ENCODE measurements at regions of chr2 and their contacts with region 1.

Region 1: DNA sequence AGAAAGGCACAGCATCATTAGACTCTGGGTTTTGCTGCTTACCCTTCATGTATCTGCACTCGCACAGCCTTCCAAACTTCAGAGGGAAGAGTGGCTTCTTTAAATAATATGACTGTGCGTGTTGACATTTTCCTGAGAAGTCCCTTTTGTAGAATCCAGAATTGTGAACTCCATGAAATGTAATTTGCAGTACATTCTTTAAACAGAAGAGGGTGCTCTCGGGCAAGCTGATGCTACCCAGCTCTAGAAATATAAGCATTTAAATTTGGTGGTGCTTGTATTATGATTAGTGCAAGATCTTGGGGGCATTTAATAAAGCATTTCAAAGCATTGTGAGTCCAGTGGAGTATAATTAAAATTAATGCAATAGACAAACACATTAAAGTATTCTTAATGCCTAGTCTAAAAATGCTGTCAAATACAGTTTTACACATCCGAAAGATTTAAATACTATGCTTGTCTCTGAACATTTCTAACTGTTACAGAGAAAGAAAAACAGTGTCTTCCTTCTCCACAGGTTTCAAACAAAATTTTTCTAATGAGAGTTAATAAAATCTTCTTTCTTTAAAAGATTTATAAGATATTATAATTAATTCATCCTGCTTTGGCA is 17.3 kb upstream of the GTF2A1L start:
- DNase-seq: no peak
- H3K4me3 ChIP-seq: no peak overlapping the region
- H3K27ac ChIP-seq: peak overlapping the region in 3 of 4 donors; percentile 5 to 30 (median 29)
- H3K4me1 ChIP-seq: peaks cover 0 to 38% (median 34%) of the 10 kb centered on the region in 4 donors
- H3K27me3 ChIP-seq: no peaks in the 10 kb centered on the region
- CTCF ChIP-seq: peak; percentile 56 to 77 (median 75)
- EP300 ChIP-seq: no peak
- POLR2A ChIP-seq: no peak

Region 2: DNA sequence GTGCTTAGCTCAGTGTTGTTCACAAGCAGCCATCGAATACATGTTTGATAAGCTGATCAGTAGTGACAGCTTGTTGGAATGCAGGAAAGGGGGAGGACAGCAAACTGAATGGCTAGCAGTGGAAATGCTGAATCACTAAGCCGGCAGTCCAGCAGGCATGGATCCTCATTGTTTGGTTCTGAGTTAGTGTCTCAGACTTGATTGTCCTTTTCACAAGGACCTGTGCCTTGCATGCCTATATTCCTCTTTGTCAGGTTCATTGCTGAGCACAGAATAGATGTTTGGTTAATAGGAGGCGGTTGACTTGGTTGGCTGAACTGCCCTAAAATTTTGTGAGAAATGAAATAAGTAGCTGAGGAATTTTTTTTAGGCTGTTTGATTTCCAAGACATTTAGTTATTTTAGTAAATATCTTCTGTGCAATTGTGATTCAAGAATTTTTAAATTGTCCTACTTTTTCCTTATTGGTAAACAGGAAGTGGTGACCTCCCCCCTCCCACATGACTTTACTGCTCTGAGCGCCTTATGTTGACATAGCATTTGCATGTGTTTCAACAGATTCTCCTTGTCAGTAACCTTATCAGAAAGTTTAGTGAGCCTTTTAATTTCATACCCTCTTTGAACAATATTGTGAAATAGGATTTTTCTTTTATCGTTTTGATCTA is 91.7 kb before region 1 on chr2:
- intact Hi-C with region 1: no loop called
- DNase-seq: no peak
- H3K4me3 ChIP-seq: no peak overlapping the region
- H3K27ac ChIP-seq: peak overlapping the region; percentile 73 to 90 (median 80)
- H3K4me1 ChIP-seq: peaks cover 21 to 49% (median 44%) of the 10 kb centered on the region in 4 donors
- H3K27me3 ChIP-seq: no peaks in the 10 kb centered on the region
- CTCF ChIP-seq: no peak
- EP300 ChIP-seq: no peak
- POLR2A ChIP-seq: no peak

Region 3: GRCh38 chr2:48651153-48651790 is 51.0 kb after region 1 on chr2:
- intact Hi-C with region 1: no loop called
- DNase-seq: no peak
- H3K4me3 ChIP-seq: no peak overlapping the region
- H3K27ac ChIP-seq: no peak overlapping the region
- H3K4me1 ChIP-seq: peaks cover 0 to 10% (median 10%) of the 10 kb centered on the region in 4 donors
- H3K27me3 ChIP-seq: no peaks in the 10 kb centered on the region
- CTCF ChIP-seq: no peak
- EP300 ChIP-seq: no peak
- POLR2A ChIP-seq: no peak

Region 4: GRCh38 chr2:48727565-48727964 is 127.3 kb after region 1 on chr2:
- intact Hi-C with region 1: loop called (anchors 2 kb)
- DNase-seq: no peak
- H3K4me3 ChIP-seq: no peak overlapping the region
- H3K27ac ChIP-seq: peak overlapping the region; percentile 40 to 71 (median 67)
- H3K4me1 ChIP-seq: peaks cover 15 to 53% (median 43%) of the 10 kb centered on the region in 4 donors
- H3K27me3 ChIP-seq: no peaks in the 10 kb centered on the region
- CTCF ChIP-seq: no peak
- EP300 ChIP-seq: no peak
- POLR2A ChIP-seq: no peak

Region 5: DNA sequence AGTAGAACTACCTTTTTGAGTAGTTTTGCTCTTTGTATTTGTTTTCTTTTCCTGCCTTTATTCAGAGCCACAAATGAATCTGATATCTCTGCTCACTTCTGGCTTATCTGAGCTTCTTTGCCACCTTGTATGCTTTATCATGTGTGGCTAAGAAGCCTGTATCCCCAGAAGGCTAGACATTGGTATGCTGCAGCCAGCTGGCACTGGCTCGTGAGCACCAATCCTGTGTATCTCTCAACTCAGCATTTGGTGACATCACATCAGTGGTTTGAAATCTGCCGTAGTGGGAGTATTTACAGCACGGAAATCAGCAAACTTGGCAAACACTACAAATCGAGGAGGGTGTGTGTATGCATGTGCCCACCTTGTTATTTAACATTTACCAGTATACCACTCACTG is 338.9 kb after region 1 on chr2:
- intact Hi-C with region 1: no loop called
- DNase-seq: peak; percentile 39
- H3K4me3 ChIP-seq: no peak overlapping the region
- H3K27ac ChIP-seq: no peak overlapping the region
- H3K4me1 ChIP-seq: peaks cover 7 to 19% (median 13%) of the 10 kb centered on the region in 4 donors
- H3K27me3 ChIP-seq: no peaks in the 10 kb centered on the region
- CTCF ChIP-seq: no peak
- EP300 ChIP-seq: no peak
- POLR2A ChIP-seq: no peak